ENCODE measurements at regions of chr17 and their contacts with region 1.

Region 1: GRCh38 chr17:28041068-28041843 is 1.2 kb upstream of the NLK start:
- DNase-seq: peak; percentile 100
- H3K4me3 ChIP-seq: peak overlapping the region; percentile 79 to 87 (median 86)
- H3K27ac ChIP-seq: peak overlapping the region; percentile 21
- H3K4me1 ChIP-seq: peaks cover 13% of the 10 kb centered on the region
- H3K27me3 ChIP-seq: no peaks in the 10 kb centered on the region
- CTCF ChIP-seq: no peak

Region 2: GRCh38 chr17:27544350-27545131 is 496.7 kb before region 1 on chr17:
- CTCF ChIA-PET with region 1: no interaction called
- dilution Hi-C with region 1: no loop called
- in situ Hi-C with region 1: no loop called
- intact Hi-C with region 1: no loop called
- DNase-seq: peak; percentile 54
- H3K4me3 ChIP-seq: no peak overlapping the region
- H3K27ac ChIP-seq: no peak overlapping the region
- H3K4me1 ChIP-seq: no peaks in the 10 kb centered on the region
- H3K27me3 ChIP-seq: no peaks in the 10 kb centered on the region
- CTCF ChIP-seq: no peak

Region 3: DNA sequence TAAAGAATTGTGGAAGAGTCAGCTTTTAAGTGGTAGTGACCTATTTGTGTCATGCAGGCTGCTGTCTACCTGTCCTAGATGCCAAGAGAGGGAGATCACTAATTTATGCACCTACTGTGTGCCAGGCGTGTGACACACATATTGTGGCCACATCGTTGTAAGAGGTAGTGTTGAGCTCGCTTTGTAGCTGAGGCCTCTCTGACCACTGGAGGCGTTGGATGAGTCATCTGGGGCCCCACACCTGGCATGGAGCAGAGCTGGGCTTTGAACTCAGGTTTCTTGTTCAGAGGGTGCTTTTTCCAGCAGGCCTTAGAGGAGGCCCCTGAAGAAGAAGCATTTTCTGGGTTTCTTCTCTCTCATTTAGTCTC is 462.6 kb before region 1 on chr17:
- CTCF ChIA-PET with region 1: no interaction called
- dilution Hi-C with region 1: no loop called
- in situ Hi-C with region 1: no loop called
- intact Hi-C with region 1: no loop called
- DNase-seq: peak; percentile 24
- H3K4me3 ChIP-seq: no peak overlapping the region
- H3K27ac ChIP-seq: no peak overlapping the region
- H3K4me1 ChIP-seq: peaks cover 10% of the 10 kb centered on the region
- H3K27me3 ChIP-seq: no peaks in the 10 kb centered on the region
- CTCF ChIP-seq: peak in 1 of 2 donors; percentile 5

Region 4: GRCh38 chr17:27892866-27893769 is 148.1 kb before region 1 on chr17 and contains the start of gene LYRM9:
- CTCF ChIA-PET with region 1: no interaction called
- dilution Hi-C with region 1: no loop called
- in situ Hi-C with region 1: no loop called
- intact Hi-C with region 1: loop called (anchors 10 kb)
- DNase-seq: peak; percentile 78
- H3K4me3 ChIP-seq: peak within 1 kb of the TSS; percentile 54 to 68 (median 58)
- H3K27ac ChIP-seq: no peak within 1 kb of the TSS
- H3K4me1 ChIP-seq: no peaks in the 10 kb centered on the region
- H3K27me3 ChIP-seq: no peaks in the 10 kb centered on the region
- CTCF ChIP-seq: peak; percentile 74 to 78
- total RNA-seq, gene LYRM9: 4.3 to 9.8 TPM

Region 5: DNA sequence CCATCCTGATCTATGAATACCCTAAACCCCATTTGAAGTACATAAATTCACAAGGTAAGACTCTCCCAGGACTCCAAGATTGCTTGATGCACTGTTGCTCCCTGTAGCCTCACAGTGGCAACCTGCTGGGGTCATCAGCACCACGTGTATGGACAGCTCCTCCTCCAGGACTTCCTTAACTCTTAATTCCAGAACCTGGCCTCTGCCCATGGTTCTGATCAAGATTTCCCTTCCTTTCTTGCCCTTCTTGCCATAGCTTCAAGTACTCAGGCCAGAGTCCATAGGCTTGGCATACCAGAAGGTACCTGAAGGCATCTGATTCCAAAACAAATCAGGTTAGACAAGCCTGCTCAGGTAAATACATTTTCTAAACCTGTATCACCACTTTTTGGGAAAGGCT is 32.7 kb before region 1 on chr17:
- CTCF ChIA-PET with region 1: no interaction called
- dilution Hi-C with region 1: no loop called
- in situ Hi-C with region 1: no loop called
- intact Hi-C with region 1: no loop called
- DNase-seq: peak; percentile 60
- H3K4me3 ChIP-seq: no peak overlapping the region
- H3K27ac ChIP-seq: no peak overlapping the region
- H3K4me1 ChIP-seq: no peaks in the 10 kb centered on the region
- H3K27me3 ChIP-seq: peaks cover 1% of the 10 kb centered on the region
- CTCF ChIP-seq: no peak

Region 6: GRCh38 chr17:28078341-28079229 is 37.3 kb after region 1 on chr17:
- CTCF ChIA-PET with region 1: no interaction called
- dilution Hi-C with region 1: loop called (anchors 5 kb)
- in situ Hi-C with region 1: no loop called
- intact Hi-C with region 1: no loop called
- DNase-seq: peak; percentile 5
- H3K4me3 ChIP-seq: no peak overlapping the region
- H3K27ac ChIP-seq: no peak overlapping the region
- H3K4me1 ChIP-seq: no peaks in the 10 kb centered on the region
- H3K27me3 ChIP-seq: no peaks in the 10 kb centered on the region
- CTCF ChIP-seq: no peak

Region 7: DNA sequence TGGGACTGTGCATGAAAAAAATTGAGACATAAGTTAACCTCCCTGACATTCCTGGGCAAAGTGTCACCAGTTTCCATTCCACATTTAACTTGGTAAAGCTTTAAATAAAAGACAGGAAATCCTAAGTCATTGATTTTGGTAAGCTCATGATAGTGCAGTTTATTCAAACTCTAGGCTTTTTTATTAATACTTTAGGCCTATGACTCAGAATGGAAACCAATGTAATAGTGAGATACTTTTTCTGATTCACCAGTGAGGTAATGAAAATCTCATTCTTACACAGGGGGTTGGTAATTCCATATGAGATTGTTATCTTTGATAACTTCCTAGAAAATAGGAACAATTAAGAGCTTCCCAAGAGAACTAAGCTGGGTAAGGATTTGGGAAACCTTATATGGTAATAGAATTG is 92.3 kb after region 1 on chr17:
- CTCF ChIA-PET with region 1: no interaction called
- dilution Hi-C with region 1: no loop called
- in situ Hi-C with region 1: no loop called
- intact Hi-C with region 1: loop called (anchors 10 kb)
- DNase-seq: peak; percentile 79
- H3K4me3 ChIP-seq: no peak overlapping the region
- H3K27ac ChIP-seq: peak overlapping the region; percentile 43
- H3K4me1 ChIP-seq: peaks cover 11% of the 10 kb centered on the region
- H3K27me3 ChIP-seq: no peaks in the 10 kb centered on the region
- CTCF ChIP-seq: no peak

Region 8: DNA sequence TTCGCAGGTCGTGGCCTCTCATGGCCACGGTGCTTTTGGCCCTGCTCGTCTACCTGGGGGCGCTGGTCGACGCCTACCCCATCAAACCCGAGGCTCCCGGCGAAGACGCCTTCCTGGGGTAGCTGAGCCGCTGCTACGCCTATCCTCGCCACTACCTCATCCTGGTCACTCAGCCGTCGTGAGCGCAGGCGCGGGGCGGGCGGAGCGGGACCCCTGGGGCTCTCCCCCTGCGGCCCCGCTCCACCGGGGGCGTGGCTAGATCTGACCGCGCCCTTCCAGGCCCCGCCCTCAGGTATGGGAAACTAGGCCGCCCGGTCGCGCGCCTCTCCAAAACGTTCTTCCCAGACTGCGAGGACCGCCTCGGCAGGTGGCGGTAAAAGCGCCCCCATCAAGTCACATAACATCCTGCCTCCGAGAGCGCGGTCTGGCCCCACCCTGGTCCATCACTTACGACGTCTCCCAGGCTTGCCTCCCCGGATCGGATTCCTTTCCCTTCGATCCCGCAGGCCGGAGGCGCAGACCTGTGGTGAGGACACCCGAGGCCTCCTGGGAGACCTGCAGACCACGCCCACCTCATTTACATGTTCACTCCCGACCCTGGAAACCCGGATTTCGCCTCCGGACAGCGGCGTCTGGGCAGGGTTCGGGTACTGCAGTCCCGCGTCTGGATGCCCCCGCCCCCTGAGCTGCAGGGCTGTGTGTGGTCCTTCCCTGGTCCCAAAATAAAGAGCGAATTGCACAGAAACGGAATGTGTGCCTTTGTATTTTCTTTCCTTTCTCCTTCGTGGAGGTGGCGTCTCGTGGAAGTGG is 186.3 kb after region 1 on chr17:
- CTCF ChIA-PET with region 1: no interaction called
- dilution Hi-C with region 1: no loop called
- in situ Hi-C with region 1: no loop called
- intact Hi-C with region 1: loop called (anchors 2 kb)
- DNase-seq: peak; percentile 73
- H3K4me3 ChIP-seq: peak overlapping the region; percentile 38 to 53 (median 49)
- H3K27ac ChIP-seq: no peak overlapping the region
- H3K4me1 ChIP-seq: peaks cover 16% of the 10 kb centered on the region
- H3K27me3 ChIP-seq: no peaks in the 10 kb centered on the region
- CTCF ChIP-seq: peak in 1 of 2 donors; percentile 16

Region 9: GRCh38 chr17:28318759-28319660 is 277.8 kb after region 1 on chr17 and contains the start of gene TMEM97:
- CTCF ChIA-PET with region 1: no interaction called
- dilution Hi-C with region 1: no loop called
- in situ Hi-C with region 1: no loop called
- intact Hi-C with region 1: loop called (anchors 10 kb)
- DNase-seq: peak; percentile 95
- H3K4me3 ChIP-seq: peak within 1 kb of the TSS; percentile 55 to 69 (median 64)
- H3K27ac ChIP-seq: peak within 1 kb of the TSS; percentile 52
- H3K4me1 ChIP-seq: peaks cover 12% of the 10 kb centered on the region
- H3K27me3 ChIP-seq: no peaks in the 10 kb centered on the region
- CTCF ChIP-seq: peak in 1 of 2 donors; percentile 26
- total RNA-seq, gene TMEM97: 12.5 to 34.6 TPM

Region 10: GRCh38 chr17:28346746-28347246 is 305.5 kb after region 1 on chr17:
- CTCF ChIA-PET with region 1: no interaction called
- dilution Hi-C with region 1: no loop called
- in situ Hi-C with region 1: no loop called
- intact Hi-C with region 1: loop called (anchors 1 kb)
- DNase-seq: no peak
- H3K4me3 ChIP-seq: no peak overlapping the region
- H3K27ac ChIP-seq: peak overlapping the region; percentile 47
- H3K4me1 ChIP-seq: peaks cover 33% of the 10 kb centered on the region
- H3K27me3 ChIP-seq: no peaks in the 10 kb centered on the region
- CTCF ChIP-seq: peak in 1 of 2 donors; percentile 33